ENCODE measurements at regions of chr12 and their contacts with region 1.

Region 1: DNA sequence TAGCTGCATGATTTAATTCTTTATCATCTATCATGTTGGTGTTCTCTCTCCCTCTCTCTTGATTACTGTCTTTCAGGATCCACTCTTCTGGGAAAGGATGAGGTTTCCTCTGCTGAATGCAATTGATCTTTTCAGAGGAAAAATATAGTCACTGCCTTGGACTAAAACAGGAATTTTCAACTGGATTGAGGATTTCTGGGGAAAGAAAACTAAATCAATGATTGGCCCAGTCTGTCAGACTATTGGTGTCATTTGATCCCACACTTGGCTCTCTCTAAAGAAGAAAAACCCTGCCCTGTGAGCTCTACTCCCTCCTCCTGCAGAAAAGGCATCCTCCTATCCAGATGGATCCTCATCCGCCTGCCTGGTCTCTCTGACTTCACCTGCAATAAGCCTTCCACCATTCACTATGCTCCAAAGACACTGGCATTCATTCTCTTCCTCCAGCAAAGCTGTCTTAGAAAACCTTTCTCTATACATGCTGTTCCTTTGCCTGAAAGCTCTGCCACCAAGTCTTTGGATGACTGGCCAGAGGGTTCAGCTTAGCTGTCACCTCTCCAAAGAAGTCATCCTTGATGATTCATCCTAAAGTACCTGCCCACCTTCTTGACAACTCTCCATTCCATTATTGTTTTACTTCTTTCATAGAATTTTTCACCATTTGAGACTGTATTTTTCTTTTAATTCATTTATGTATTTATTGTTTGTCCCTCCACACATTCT is 127.7 kb upstream of the CAND1 start:
- DNase-seq: no peak
- H3K4me3 ChIP-seq: no peak overlapping the region
- H3K27ac ChIP-seq: no peak overlapping the region
- H3K4me1 ChIP-seq: peaks cover 12% of the 10 kb centered on the region
- H3K27me3 ChIP-seq: no peaks in the 10 kb centered on the region
- CTCF ChIP-seq: no peak

Region 2: DNA sequence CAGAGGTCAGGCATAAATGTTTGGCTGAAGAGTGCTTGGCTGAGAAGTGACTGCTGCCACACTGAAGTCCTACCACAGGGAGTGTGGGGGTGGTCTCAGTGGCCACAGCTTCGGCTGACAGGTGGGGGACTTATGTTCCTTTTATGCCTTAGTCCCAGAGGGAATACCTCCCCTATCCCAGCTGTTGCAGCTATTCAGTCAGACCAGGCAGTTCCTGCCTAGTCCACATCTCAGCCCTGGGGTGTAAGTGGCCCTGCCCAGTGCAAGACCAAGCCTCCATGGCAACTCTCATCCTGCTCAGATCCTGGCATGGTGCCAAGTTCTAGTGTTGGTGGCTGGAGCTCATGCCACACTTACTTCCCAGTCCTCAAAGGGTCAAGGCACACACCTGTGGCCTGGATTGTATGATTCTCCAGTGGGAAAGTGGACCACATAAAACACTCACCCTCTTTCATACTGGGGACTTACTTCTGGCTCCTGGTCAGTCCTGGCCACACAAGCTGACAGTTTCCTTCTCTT is 33.6 kb before region 1 on chr12:
- CTCF ChIA-PET with region 1: no interaction called
- dilution Hi-C with region 1: no loop called
- in situ Hi-C with region 1: no loop called
- intact Hi-C with region 1: no loop called
- DNase-seq: no peak
- H3K4me3 ChIP-seq: no peak overlapping the region
- H3K27ac ChIP-seq: no peak overlapping the region
- H3K4me1 ChIP-seq: no peaks in the 10 kb centered on the region
- H3K27me3 ChIP-seq: no peaks in the 10 kb centered on the region
- CTCF ChIP-seq: no peak

Region 3: DNA sequence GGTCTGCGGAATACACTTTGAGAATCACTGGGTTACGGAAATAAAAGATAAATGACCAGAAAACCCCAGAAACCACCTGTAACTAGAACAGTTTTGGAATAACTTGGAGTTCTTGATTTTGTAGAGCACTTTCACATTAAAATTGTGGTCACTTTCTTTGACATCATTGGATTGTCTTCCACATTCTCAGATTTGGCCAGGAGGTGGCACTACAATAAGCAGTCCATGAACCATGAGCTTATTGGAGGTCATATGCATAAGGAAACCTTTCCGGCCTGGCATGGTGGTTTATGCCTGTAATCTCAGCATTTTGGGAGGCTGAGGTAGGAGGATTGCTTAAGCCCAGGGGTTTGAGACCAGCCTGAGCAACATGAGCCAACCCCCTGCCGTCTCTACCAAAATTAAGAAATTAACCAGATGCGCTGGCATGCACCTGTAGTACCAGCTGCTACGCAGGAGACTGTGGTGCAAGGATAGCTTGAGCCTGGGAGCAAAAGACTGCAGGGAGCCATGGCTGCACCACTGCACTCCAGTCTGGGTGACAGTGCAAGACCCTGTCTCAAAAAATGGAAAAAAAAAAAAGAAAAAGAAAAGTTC is 20.0 kb after region 1 on chr12:
- CTCF ChIA-PET with region 1: interaction called, 14 read pairs
- dilution Hi-C with region 1: no loop called
- in situ Hi-C with region 1: no loop called
- intact Hi-C with region 1: no loop called
- DNase-seq: peak; percentile 38
- H3K4me3 ChIP-seq: no peak overlapping the region
- H3K27ac ChIP-seq: no peak overlapping the region
- H3K4me1 ChIP-seq: peaks cover under 1% of the 10 kb centered on the region
- H3K27me3 ChIP-seq: no peaks in the 10 kb centered on the region
- CTCF ChIP-seq: peak; percentile 68